ENCODE measurements at regions of chr18 and their contacts with region 1.

Region 1: GRCh38 chr18:12391618-12392165 is 14.7 kb upstream of the AFG3L2 start:
- DNase-seq: no peak
- ATAC-seq: peak; percentile 95
- H3K4me3 ChIP-seq: no peak overlapping the region
- H3K27ac ChIP-seq: no peak overlapping the region
- H3K4me1 ChIP-seq: no peaks in the 10 kb centered on the region
- H3K27me3 ChIP-seq: no peaks in the 10 kb centered on the region
- CTCF ChIP-seq: peak; percentile 95 to 96 (median 95)
- EP300 ChIP-seq: no peak
- POLR2A ChIP-seq: no peak
- RAD21 ChIP-seq: peak; percentile 93

Region 2: DNA sequence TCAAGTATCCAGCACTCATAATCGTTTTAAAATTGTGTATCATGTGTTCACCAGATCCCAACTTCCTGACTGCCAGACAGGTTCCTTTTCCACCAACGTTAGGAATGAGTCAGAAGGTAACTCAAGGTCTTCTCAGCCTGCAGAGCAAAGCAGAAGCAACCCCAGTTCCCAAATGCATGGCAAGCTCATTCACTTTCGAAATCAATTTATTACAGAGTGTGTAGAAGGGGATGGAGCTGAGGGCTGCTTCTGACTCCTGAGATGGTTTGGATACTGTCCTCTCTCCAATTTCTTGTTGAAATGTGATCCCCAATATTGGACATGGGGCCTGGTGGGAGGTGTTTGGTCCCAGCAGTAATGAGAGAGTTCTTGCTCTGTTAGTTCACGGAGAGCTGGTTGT is 1356.8 kb before region 1 on chr18:
- CTCF ChIA-PET with region 1: no interaction called
- POLR2A ChIA-PET with region 1: no interaction called
- RAD21 ChIA-PET with region 1: no interaction called
- SMC1A ChIA-PET with region 1: no interaction called
- in situ Hi-C with region 1: no loop called
- intact Hi-C with region 1: no loop called
- DNase-seq: no peak
- ATAC-seq: peak; percentile 83
- H3K4me3 ChIP-seq: peak overlapping the region; percentile 6; the same call in 1 of the 2 replicates
- H3K27ac ChIP-seq: peak overlapping the region; percentile 52
- H3K4me1 ChIP-seq: peaks cover 38% of the 10 kb centered on the region
- H3K27me3 ChIP-seq: no peaks in the 10 kb centered on the region
- CTCF ChIP-seq: no peak
- EP300 ChIP-seq: no peak
- POLR2A ChIP-seq: no peak
- RAD21 ChIP-seq: no peak

Region 3: DNA sequence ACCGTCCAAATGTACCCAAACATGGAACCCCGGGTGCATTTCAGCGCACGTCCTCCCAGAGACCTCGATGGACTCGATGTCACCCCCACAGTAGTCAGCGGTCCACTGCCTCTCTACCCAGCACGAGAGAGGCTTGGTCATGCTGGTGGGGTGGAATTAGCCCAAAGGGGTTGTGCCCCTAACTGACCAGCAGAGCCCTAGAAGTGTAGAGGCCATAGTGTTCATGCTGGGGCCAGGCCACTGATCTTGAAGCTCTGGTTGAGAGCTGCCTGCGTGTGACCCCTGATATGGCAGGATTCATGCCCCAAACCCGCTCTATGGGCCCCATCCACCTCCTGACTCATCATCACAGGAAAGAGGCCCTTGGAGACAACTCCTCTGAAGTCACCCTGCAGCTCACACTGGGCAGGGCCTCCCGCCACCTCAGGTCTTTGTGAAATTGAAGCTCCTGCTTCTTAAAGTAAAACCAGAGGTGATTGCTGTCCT is 95.7 kb before region 1 on chr18:
- CTCF ChIA-PET with region 1: no interaction called
- POLR2A ChIA-PET with region 1: no interaction called
- RAD21 ChIA-PET with region 1: no interaction called
- SMC1A ChIA-PET with region 1: no interaction called
- in situ Hi-C with region 1: no loop called
- intact Hi-C with region 1: no loop called
- DNase-seq: no peak
- ATAC-seq: no peak
- H3K4me3 ChIP-seq: no peak overlapping the region
- H3K27ac ChIP-seq: no peak overlapping the region
- H3K4me1 ChIP-seq: no peaks in the 10 kb centered on the region
- H3K27me3 ChIP-seq: no peaks in the 10 kb centered on the region
- CTCF ChIP-seq: no peak
- EP300 ChIP-seq: no peak
- POLR2A ChIP-seq: no peak
- RAD21 ChIP-seq: no peak

Region 4: DNA sequence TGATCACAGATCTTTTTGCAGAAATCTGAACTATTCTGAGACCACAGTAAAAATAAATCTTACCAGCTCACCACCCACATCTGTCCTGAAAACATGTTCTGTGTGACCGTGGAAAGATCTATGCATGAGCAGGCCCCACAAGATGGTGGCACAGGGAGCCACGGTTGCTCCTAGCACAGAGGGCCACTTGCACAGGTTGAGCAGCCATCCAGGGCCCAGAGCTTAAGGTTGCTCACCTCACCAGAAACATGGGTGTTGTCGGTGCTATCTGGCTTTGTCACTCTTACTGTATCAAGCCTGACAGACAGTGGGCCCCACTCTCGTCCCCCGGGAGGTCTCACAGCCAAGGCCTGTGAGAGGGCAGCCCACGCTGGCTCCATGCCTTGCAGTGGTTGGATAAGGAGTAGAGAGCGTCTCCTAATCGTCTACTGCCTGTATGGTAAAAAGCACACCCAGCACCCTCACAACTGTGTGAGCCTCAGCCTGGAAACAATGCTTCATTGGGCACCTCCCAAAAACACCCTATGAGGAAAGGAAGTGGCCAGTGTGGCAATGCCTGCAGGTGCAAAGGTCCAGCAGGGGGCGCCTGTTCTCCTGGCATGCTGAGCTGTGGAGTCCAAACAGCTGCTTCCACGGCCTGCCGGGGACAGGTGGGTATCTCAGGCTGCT is 64.0 kb before region 1 on chr18:
- CTCF ChIA-PET with region 1: interaction called, 10 read pairs
- POLR2A ChIA-PET with region 1: no interaction called
- RAD21 ChIA-PET with region 1: no interaction called
- SMC1A ChIA-PET with region 1: interaction called, 3 read pairs
- in situ Hi-C with region 1: no loop called
- intact Hi-C with region 1: no loop called
- DNase-seq: no peak
- ATAC-seq: peak; percentile 98
- H3K4me3 ChIP-seq: no peak overlapping the region
- H3K27ac ChIP-seq: no peak overlapping the region
- H3K4me1 ChIP-seq: no peaks in the 10 kb centered on the region
- H3K27me3 ChIP-seq: no peaks in the 10 kb centered on the region
- CTCF ChIP-seq: peak; percentile 70 to 94 (median 91)
- EP300 ChIP-seq: no peak
- POLR2A ChIP-seq: no peak; the same call in 1 of the 2 replicates
- RAD21 ChIP-seq: no peak; the same call in 1 of the 2 replicates

Region 5: GRCh38 chr18:12361770-12362378 is 29.8 kb before region 1 on chr18:
- CTCF ChIA-PET with region 1: no interaction called
- POLR2A ChIA-PET with region 1: no interaction called
- RAD21 ChIA-PET with region 1: no interaction called
- SMC1A ChIA-PET with region 1: no interaction called
- in situ Hi-C with region 1: no loop called
- intact Hi-C with region 1: no loop called
- DNase-seq: no peak
- ATAC-seq: peak; percentile 33; the same call in 2 of the 3 replicates
- H3K4me3 ChIP-seq: no peak overlapping the region
- H3K27ac ChIP-seq: no peak overlapping the region
- H3K4me1 ChIP-seq: no peaks in the 10 kb centered on the region
- H3K27me3 ChIP-seq: no peaks in the 10 kb centered on the region
- CTCF ChIP-seq: no peak
- EP300 ChIP-seq: no peak
- POLR2A ChIP-seq: no peak
- RAD21 ChIP-seq: no peak

Region 6: DNA sequence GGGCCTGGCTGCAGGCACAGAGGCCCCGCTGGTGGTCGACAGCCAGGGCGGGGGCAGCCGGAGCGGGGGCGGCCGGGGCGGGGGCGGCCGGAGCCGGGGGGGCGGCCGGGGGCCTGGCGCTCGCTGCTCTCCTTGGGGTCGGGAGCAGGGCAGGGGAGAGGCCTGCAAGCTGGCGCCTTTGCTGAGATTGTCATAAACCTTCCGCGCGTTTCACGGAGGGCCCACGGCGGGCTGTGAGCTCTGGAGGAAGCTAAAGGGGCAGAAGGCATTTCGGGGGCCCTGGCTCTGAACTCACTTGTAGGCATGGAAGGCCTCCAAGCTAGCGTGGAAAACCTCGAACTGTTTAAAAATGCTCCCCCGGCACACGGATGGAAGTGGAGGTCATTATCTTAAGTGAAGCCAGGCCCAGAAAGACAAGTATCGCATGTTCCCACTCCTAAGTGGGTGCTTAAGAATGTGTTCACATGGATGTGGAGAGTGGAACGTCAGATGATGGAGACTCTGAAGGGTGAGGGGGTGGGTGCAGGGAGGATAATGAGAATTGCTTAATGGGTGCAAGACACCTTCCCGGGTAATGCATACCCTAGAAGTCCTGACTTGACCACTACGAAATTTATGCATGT is 16.7 kb after region 1 on chr18:
- CTCF ChIA-PET with region 1: interaction called, 11 read pairs
- POLR2A ChIA-PET with region 1: no interaction called
- RAD21 ChIA-PET with region 1: interaction called, 6 read pairs
- SMC1A ChIA-PET with region 1: interaction called, 3 read pairs
- in situ Hi-C with region 1: no loop called
- intact Hi-C with region 1: no loop called
- DNase-seq: no peak
- ATAC-seq: no peak
- H3K4me3 ChIP-seq: peak overlapping the region; percentile 64
- H3K27ac ChIP-seq: peak overlapping the region; percentile 68
- H3K4me1 ChIP-seq: peaks cover 4% of the 10 kb centered on the region
- H3K27me3 ChIP-seq: peaks cover 3 to 9% of the 10 kb centered on the region in 2 experiments
- CTCF ChIP-seq: no peak
- EP300 ChIP-seq: no peak
- POLR2A ChIP-seq: no peak
- RAD21 ChIP-seq: no peak

Region 7: GRCh38 chr18:12531749-12532148 is 140.1 kb after region 1 on chr18:
- CTCF ChIA-PET with region 1: interaction called, 3 read pairs
- POLR2A ChIA-PET with region 1: no interaction called
- RAD21 ChIA-PET with region 1: no interaction called
- SMC1A ChIA-PET with region 1: no interaction called
- in situ Hi-C with region 1: no loop called
- intact Hi-C with region 1: loop called (anchors 10 kb)
- DNase-seq: no peak
- ATAC-seq: no peak
- H3K4me3 ChIP-seq: no peak overlapping the region
- H3K27ac ChIP-seq: no peak overlapping the region
- H3K4me1 ChIP-seq: no peaks in the 10 kb centered on the region
- H3K27me3 ChIP-seq: no peaks in the 10 kb centered on the region; a peak in 2 of 4 replicates
- CTCF ChIP-seq: no peak
- EP300 ChIP-seq: no peak
- POLR2A ChIP-seq: no peak
- RAD21 ChIP-seq: peak; percentile 28; the same call in 1 of the 2 replicates

Region 8: DNA sequence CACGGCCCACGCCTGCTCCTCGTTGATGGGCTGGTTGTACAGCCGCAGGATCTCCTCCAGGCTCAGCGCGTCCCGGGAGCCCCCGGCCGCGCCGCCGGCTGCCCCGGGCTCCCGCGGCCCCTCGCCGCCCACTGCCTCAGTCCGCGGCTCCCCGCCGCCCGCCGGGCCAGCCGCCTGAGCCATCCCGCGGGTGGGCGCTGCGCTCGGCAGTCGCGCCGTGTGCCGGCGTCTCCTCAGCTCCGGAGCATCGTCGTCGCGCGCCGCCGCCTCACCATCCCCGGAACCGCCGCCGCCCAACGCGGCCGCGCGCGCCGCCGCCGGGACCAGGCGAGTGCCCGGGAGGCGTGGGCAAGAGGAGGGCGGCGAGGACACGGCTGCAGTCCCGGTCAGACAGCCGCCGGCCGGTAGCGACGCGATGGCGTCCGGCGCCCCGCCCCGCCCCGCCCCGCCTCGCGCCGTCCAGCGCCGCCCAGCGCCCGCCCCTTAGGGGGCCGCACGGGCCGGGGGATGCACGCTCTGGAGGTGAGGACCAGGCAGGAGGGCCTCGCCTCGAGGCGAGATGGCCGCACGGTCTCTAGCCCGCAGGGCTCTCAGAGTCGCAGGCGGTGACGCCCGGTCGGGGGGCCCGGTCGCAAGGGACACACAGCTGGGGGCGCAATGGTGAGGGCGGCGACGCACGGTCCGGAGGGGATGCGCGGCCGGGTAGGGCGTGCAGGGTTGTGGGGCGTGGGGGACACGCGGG is 266.2 kb after region 1 on chr18 and contains the start of gene SPIRE1:
- CTCF ChIA-PET with region 1: interaction called, 71 read pairs
- POLR2A ChIA-PET with region 1: interaction called, 3 read pairs
- RAD21 ChIA-PET with region 1: interaction called, 5 read pairs
- SMC1A ChIA-PET with region 1: interaction called, 5 read pairs
- in situ Hi-C with region 1: loop called (anchors 5 kb)
- intact Hi-C with region 1: loop called (anchors 1 kb)
- DNase-seq: no peak
- ATAC-seq: peak; percentile 82
- H3K4me3 ChIP-seq: peak within 1 kb of the TSS; percentile 73
- H3K27ac ChIP-seq: no peak within 1 kb of the TSS
- H3K4me1 ChIP-seq: no peaks in the 10 kb centered on the region
- H3K27me3 ChIP-seq: peaks cover 0 to 2% of the 10 kb centered on the region in 2 experiments; a peak in 2 of 4 replicates
- CTCF ChIP-seq: no peak
- EP300 ChIP-seq: no peak
- POLR2A ChIP-seq: peak; percentile 43; the same call in 1 of the 2 replicates
- RAD21 ChIP-seq: no peak
- polyA plus RNA-seq, gene SPIRE1: 1.9 to 2.6 TPM